Breast epithelium (tissue), 4 donors: ENCODE measurements at regions of chr11 and their contacts with region 1.

Region 1: GRCh38 chr11:30697032-30697431 is 110.9 kb upstream of the MPPED2 start:
- DNase-seq: no peak
- H3K4me3 ChIP-seq: no peak overlapping the region
- H3K27ac ChIP-seq: no peak overlapping the region
- H3K4me1 ChIP-seq: no peaks in the 10 kb centered on the region
- H3K27me3 ChIP-seq: no peaks in the 10 kb centered on the region
- CTCF ChIP-seq: no peak
- POLR2A ChIP-seq: no peak

Region 2: GRCh38 chr11:30346068-30346688 is 350.9 kb before region 1 on chr11:
- intact Hi-C with region 1: no loop called
- DNase-seq: no peak
- H3K4me3 ChIP-seq: no peak overlapping the region
- H3K27ac ChIP-seq: no peak overlapping the region
- H3K4me1 ChIP-seq: no peaks in the 10 kb centered on the region
- H3K27me3 ChIP-seq: no peaks in the 10 kb centered on the region
- CTCF ChIP-seq: peak; percentile 32 to 61 (median 39)
- POLR2A ChIP-seq: no peak

Region 3: GRCh38 chr11:30873924-30874610 is 177.0 kb after region 1 on chr11:
- intact Hi-C with region 1: loop called (anchors 5 kb)
- DNase-seq: peak in 1 of 2 donors; percentile 24
- H3K4me3 ChIP-seq: no peak overlapping the region
- H3K27ac ChIP-seq: no peak overlapping the region
- H3K4me1 ChIP-seq: no peaks in the 10 kb centered on the region
- H3K27me3 ChIP-seq: no peaks in the 10 kb centered on the region
- CTCF ChIP-seq: no peak
- POLR2A ChIP-seq: no peak